Common myeloid progenitor, CD34-positive (primary cell): ENCODE measurements at regions of chr11 and their contacts with region 1.

Region 1: GRCh38 chr11:73335204-73335923 is 27.3 kb downstream of the ARHGEF17 start:
- DNase-seq: peak; percentile 61 to 76 (median 66)
- H3K4me3 ChIP-seq: peak overlapping the region in 1 of 7 experiments; percentile 19
- H3K27ac ChIP-seq: no peak overlapping the region
- H3K4me1 ChIP-seq: peaks cover 0 to 48% (median 44%) of the 10 kb centered on the region in 4 experiments
- H3K27me3 ChIP-seq: no peaks in the 10 kb centered on the region

Region 2: GRCh38 chr11:73242251-73243079 is 92.9 kb before region 1 on chr11:
- CTCF ChIA-PET with region 1: interaction called, 11 read pairs
- POLR2A ChIA-PET with region 1: no interaction called
- DNase-seq: peak; percentile 66 to 80 (median 78)
- H3K4me3 ChIP-seq: peak overlapping the region in 4 of 7 experiments; percentile 16 to 70 (median 54)
- H3K27ac ChIP-seq: no peak overlapping the region
- H3K4me1 ChIP-seq: peaks cover 0 to 11% (median 9%) of the 10 kb centered on the region in 4 experiments
- H3K27me3 ChIP-seq: no peaks in the 10 kb centered on the region

Region 3: GRCh38 chr11:73307323-73308002 is 27.9 kb before region 1 on chr11:
- CTCF ChIA-PET with region 1: interaction called, 371 read pairs
- POLR2A ChIA-PET with region 1: interaction called, 36 read pairs
- DNase-seq: peak; percentile 96 to 98 (median 97)
- H3K4me3 ChIP-seq: peak overlapping the region; percentile 57 to 91 (median 81)
- H3K27ac ChIP-seq: peak overlapping the region; percentile 40 to 50
- H3K4me1 ChIP-seq: peaks cover 3 to 50% (median 49%) of the 10 kb centered on the region in 4 experiments
- H3K27me3 ChIP-seq: no peaks in the 10 kb centered on the region

Region 4: GRCh38 chr11:73325036-73325981 is 10.1 kb before region 1 on chr11:
- CTCF ChIA-PET with region 1: interaction called, 371 read pairs
- POLR2A ChIA-PET with region 1: interaction called, 9 read pairs
- DNase-seq: no peak
- H3K4me3 ChIP-seq: no peak overlapping the region
- H3K27ac ChIP-seq: peak overlapping the region in 1 of 2 experiments; percentile 46
- H3K4me1 ChIP-seq: peaks cover 16 to 80% (median 73%) of the 10 kb centered on the region in 4 experiments
- H3K27me3 ChIP-seq: no peaks in the 10 kb centered on the region

Region 5: DNA sequence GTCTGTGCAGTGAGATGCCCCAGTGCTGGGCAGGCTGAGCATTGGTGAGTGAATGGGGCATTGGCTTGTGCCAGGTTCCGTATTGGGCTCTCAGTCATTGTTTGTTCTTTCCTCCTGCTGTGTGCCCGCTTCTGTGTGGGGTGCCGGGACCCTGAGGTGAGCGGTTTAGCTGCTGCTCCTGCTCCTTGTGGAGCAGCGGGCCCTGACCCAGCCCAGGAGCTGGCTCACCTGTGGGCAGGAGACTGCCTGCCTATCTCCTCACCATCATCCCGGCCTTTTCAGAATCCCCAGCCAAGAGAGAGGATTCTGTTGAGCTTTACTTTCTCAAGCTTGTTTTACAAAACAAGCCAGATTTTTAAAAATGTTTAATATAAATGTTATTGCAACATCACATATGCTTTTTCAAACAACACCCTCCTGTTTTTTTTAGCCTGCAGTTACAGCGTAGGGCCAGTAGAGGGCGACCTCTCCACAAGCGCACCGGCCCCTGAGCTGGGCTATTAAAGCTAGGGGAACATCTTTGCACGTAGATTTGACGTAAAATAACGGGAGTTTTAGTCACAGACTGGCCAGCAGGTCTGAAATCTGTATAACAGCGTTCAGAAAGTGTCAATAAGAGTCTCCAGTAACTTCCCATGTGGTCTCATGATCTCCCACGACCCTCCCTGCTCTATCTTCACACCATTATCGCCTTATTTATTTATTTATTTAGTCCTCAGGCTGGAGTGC is 15.7 kb after region 1 on chr11:
- CTCF ChIA-PET with region 1: interaction called, 44 read pairs
- POLR2A ChIA-PET with region 1: interaction called, 4 read pairs
- DNase-seq: peak; percentile 75 to 86 (median 83)
- H3K4me3 ChIP-seq: no peak overlapping the region
- H3K27ac ChIP-seq: no peak overlapping the region
- H3K4me1 ChIP-seq: no peaks in the 10 kb centered on the region
- H3K27me3 ChIP-seq: no peaks in the 10 kb centered on the region